ENCODE measurements at regions of chr17 and their contacts with region 1.

Region 1: GRCh38 chr17:58329035-58329809 is 627 bp upstream of the TSPOAP1 start:
- DNase-seq: peak; percentile 87
- H3K4me3 Mint-ChIP-seq: peak overlapping the region; percentile 99
- H3K27ac Mint-ChIP-seq: peak overlapping the region; percentile 88
- H3K4me1 Mint-ChIP-seq: peaks cover 21% of the 10 kb centered on the region
- H3K27me3 Mint-ChIP-seq: no peaks in the 10 kb centered on the region

Region 2: GRCh38 chr17:58242171-58242784 is 86.9 kb before region 1 on chr17:
- intact Hi-C with region 1: no loop called
- DNase-seq: no peak
- H3K4me3 Mint-ChIP-seq: no peak overlapping the region
- H3K27ac Mint-ChIP-seq: no peak overlapping the region
- H3K4me1 Mint-ChIP-seq: no peaks in the 10 kb centered on the region
- H3K27me3 Mint-ChIP-seq: peaks cover 53% of the 10 kb centered on the region

Region 3: GRCh38 chr17:58344047-58344790 is 15.0 kb after region 1 on chr17:
- intact Hi-C with region 1: loop called (anchors 1 kb)
- DNase-seq: peak; percentile 91
- H3K4me3 Mint-ChIP-seq: peak overlapping the region; percentile 99
- H3K27ac Mint-ChIP-seq: peak overlapping the region; percentile 99
- H3K4me1 Mint-ChIP-seq: peaks cover 66% of the 10 kb centered on the region
- H3K27me3 Mint-ChIP-seq: no peaks in the 10 kb centered on the region

Region 4: DNA sequence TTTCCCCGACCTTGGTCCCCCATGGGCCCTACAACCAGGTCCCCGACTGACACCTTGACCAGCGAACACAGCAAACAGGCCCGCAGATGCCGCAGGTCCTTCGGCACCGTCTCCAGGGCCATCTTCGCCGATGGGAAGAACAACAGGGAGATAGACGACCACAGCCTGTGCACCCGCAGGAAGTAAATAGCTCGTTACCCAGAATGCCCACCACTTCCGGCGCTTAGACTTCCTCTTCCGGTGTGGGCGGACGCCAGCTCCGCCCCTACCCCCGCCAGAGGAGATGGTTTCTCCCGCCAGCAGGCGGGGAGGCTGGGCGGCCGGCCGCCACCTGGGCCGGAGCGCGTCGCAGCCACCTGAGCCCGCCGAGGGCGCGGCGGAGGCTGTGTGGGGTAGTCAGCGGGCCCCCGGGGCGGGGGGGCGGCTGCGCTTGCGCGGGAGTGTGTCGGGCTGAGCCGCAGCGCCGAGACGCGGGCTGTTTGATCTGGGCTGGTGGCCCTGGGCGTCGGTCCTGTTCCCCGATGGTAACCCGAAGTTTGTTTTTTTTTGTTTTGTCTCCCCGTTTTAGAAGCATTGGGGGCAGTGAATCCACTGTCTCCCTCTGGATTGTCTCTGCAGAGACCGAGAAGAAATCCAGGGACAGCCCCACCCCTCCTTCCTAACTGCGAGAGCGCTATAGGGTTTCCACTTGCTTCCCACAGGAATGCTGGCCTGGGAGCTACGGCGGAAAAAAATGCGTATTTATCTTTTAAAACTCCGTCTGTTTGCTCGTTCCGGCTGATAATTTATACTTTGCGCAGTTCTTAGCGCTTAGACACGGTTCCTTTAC is 23.0 kb after region 1 on chr17 and contains the start of gene SUPT4H1:
- intact Hi-C with region 1: loop called (anchors 1 kb)
- DNase-seq: peak; percentile 90
- H3K4me3 Mint-ChIP-seq: peak within 1 kb of the TSS; percentile 100
- H3K27ac Mint-ChIP-seq: peak within 1 kb of the TSS; percentile 98
- H3K4me1 Mint-ChIP-seq: peaks cover 49% of the 10 kb centered on the region
- H3K27me3 Mint-ChIP-seq: no peaks in the 10 kb centered on the region
- total RNA-seq, gene SUPT4H1: 153 and 160 TPM in 2 replicates

Region 5: DNA sequence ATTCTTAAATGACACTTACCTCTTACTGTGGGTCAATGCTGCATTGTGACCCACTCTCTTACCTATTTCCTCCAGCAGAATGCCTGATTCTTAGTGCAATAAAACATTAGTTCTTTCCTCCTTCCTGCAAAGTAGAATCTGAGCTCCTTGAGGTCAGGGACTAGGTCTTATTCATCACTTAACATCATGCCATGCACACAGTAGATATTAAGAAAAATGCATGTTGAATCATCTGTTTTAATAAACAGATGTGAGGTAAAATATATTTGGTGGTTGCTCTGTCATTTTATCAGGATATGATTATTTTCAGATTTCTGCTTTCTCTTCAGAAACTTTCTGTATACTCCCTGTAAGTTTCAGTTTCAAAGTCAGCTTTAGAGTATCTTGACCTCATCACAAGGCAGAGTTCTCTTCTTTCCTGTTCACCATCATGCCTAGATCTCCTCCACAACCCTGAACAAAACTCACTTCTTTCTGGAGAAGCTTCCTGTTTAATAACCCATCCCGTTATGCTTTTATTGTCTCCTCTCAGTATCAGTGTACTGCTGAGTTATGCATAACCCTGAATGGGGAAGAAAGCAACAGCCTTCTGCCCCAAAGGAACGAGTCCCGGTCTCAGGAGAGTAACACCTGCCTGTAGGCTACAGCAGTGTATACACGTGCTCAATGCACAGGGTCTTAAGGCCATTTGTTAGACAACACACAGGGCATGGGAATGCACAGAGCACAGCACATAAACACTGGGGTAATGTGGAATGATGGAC is 53.1 kb after region 1 on chr17:
- intact Hi-C with region 1: loop called (anchors 2 kb)
- DNase-seq: peak; percentile 22
- H3K4me3 Mint-ChIP-seq: peak overlapping the region; percentile 9
- H3K27ac Mint-ChIP-seq: peak overlapping the region; percentile 66
- H3K4me1 Mint-ChIP-seq: peaks cover 71% of the 10 kb centered on the region
- H3K27me3 Mint-ChIP-seq: no peaks in the 10 kb centered on the region

Region 6: GRCh38 chr17:58517734-58518609 is 188.8 kb after region 1 on chr17:
- intact Hi-C with region 1: loop called (anchors 2 kb)
- DNase-seq: peak; percentile 100
- H3K4me3 Mint-ChIP-seq: peak overlapping the region; percentile 89
- H3K27ac Mint-ChIP-seq: peak overlapping the region; percentile 95
- H3K4me1 Mint-ChIP-seq: peaks cover 34% of the 10 kb centered on the region
- H3K27me3 Mint-ChIP-seq: peaks cover 2% of the 10 kb centered on the region

Region 7: GRCh38 chr17:59106463-59107305 is 777.5 kb after region 1 on chr17 and contains the start of gene TRIM37:
- intact Hi-C with region 1: loop called (anchors 10 kb)
- DNase-seq: peak; percentile 100
- H3K4me3 Mint-ChIP-seq: peak within 1 kb of the TSS; percentile 94
- H3K27ac Mint-ChIP-seq: peak within 1 kb of the TSS; percentile 93
- H3K4me1 Mint-ChIP-seq: peaks cover 43% of the 10 kb centered on the region
- H3K27me3 Mint-ChIP-seq: no peaks in the 10 kb centered on the region
- total RNA-seq, gene TRIM37: 28.4 and 31.4 TPM in 2 replicates